ENCODE measurements at regions of chr15 and their contacts with region 1.

Region 1: GRCh38 chr15:83559310-83559966 is 94.5 kb upstream of the ADAMTSL3 start:
- ATAC-seq: peak in 5 of 8 experiments; percentile 47 to 95 (median 82)
- H3K4me3 ChIP-seq: no peak overlapping the region
- H3K27ac ChIP-seq: no peak overlapping the region
- H3K4me1 ChIP-seq: no peaks in the 10 kb centered on the region

Region 2: GRCh38 chr15:82611348-82611747 is 948.1 kb before region 1 on chr15:
- in situ Hi-C with region 1: no loop called
- ATAC-seq: no peak
- H3K4me3 ChIP-seq: no peak overlapping the region
- H3K27ac ChIP-seq: no peak overlapping the region
- H3K4me1 ChIP-seq: no peaks in the 10 kb centered on the region

Region 3: GRCh38 chr15:83248151-83249029 is 311.0 kb before region 1 on chr15:
- in situ Hi-C with region 1: loop called in 6 of 9 experiments (anchors 25 kb)
- ATAC-seq: peak; percentile 49 to 90 (median 63)
- H3K4me3 ChIP-seq: no peak overlapping the region
- H3K27ac ChIP-seq: no peak overlapping the region
- H3K4me1 ChIP-seq: peaks cover 3 to 6% of the 10 kb centered on the region in 2 donors

Region 4: DNA sequence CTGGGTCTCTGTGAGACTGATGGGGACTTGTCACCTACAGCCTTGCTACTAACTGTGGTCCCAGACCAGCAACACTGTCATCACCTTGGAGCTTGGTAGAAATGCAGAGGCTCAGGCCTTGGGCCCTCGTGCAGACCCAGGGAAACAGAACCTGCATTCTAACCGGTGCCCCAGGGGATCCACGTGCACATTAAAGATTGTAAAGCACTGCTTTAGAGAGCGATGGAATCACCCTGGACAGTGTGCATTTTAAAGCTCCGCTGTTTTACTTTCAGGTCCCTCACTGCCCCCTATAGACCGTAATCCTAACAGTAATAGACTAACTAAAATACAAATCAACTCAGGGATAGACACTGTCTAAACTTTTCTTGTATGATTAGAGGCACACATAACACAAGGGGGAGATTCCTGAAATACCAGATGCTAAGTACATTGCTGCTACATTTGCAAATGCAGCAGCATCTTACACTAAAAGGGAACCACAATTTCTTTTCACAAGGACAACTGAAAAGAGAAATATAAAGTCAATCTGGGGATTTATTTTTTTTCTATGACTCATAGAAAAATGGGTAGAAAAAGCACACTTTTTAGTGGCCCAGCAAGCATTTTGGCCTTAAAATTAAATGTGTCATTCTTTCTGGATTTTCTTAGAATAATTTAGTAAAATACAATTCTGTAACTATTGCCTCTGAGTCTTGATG is 122.8 kb before region 1 on chr15:
- in situ Hi-C with region 1: loop called in 5 of 9 experiments (anchors 10 to 25 kb)
- ATAC-seq: peak; percentile 74 to 95 (median 79)
- H3K4me3 ChIP-seq: no peak overlapping the region
- H3K27ac ChIP-seq: no peak overlapping the region
- H3K4me1 ChIP-seq: no peaks in the 10 kb centered on the region

Region 5: GRCh38 chr15:83446904-83447709 is 112.3 kb before region 1 on chr15 and contains the start of gene SH3GL3:
- in situ Hi-C with region 1: loop called in 4 of 9 experiments (anchors 25 kb)
- ATAC-seq: peak; percentile 88 to 96 (median 91)
- H3K4me3 ChIP-seq: peak within 1 kb of the TSS; percentile 41 to 57 (median 50)
- H3K27ac ChIP-seq: peak within 1 kb of the TSS; percentile 35 to 73
- H3K4me1 ChIP-seq: no peaks in the 10 kb centered on the region
- total RNA-seq, gene SH3GL3: 3.7 to 22.6 (median 10.5) TPM

Region 6: GRCh38 chr15:84035399-84035766 is 475.9 kb after region 1 on chr15:
- in situ Hi-C with region 1: loop called in 1 of 9 experiments (anchors 25 kb)
- ATAC-seq: peak in 4 of 8 experiments; percentile 62 to 84 (median 74)
- H3K4me3 ChIP-seq: no peak overlapping the region
- H3K27ac ChIP-seq: no peak overlapping the region
- H3K4me1 ChIP-seq: no peaks in the 10 kb centered on the region

Measured in motor neuron (in vitro differentiated cells).